ENCODE measurements at regions of chr1 and their contacts with region 1.

Region 1: DNA sequence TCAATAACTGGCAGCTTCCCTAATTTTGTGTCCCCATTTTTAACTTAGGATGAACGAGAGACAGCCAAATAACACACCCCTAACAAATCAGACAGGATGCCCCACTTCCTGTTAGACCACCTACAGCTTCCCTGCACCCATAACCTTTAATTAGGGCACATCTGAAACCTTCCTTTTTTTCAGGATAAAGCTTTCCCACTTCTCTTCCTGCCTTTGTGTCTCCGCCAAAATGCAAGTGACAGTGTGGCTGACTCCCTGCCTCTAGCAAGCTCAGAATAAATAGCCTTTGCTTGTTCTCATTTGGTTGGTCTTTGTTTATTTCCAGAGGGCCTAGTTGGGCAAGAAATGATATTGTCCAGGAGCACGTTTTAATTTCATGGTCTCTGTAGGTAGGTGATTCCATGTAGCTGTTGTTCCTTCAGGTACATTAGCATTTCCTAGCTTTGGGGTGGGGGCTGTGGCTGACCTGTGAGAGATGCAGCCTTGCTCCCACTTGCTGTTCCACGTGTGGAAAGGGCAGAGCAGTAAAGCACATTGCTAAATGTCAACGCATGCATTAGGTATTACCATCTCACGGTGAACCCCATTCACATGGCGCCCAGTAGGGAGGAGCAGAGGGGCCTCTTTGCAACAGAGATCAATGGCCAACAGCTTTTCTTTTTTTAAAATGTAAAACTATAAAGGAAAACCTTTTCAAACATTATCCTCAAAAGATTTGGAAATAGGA is 154.9 kb downstream of the ST6GALNAC3 start:
- DNase-seq: no peak
- ATAC-seq: no peak
- H3K4me3 ChIP-seq: no peak overlapping the region
- H3K4me3 Mint-ChIP-seq: no peak overlapping the region
- H3K27ac ChIP-seq: no peak overlapping the region
- H3K27ac Mint-ChIP-seq: peak overlapping the region in 3 of 9 donors; percentile 23 to 48 (median 41)
- H3K4me1 ChIP-seq: peaks cover 0 to 17% of the 10 kb centered on the region in 2 donors
- H3K4me1 Mint-ChIP-seq: peaks cover 7 to 35% (median 21%) of the 10 kb centered on the region in 7 donors
- H3K27me3 ChIP-seq: no peaks in the 10 kb centered on the region
- H3K27me3 Mint-ChIP-seq: no peaks in the 10 kb centered on the region

Region 2: DNA sequence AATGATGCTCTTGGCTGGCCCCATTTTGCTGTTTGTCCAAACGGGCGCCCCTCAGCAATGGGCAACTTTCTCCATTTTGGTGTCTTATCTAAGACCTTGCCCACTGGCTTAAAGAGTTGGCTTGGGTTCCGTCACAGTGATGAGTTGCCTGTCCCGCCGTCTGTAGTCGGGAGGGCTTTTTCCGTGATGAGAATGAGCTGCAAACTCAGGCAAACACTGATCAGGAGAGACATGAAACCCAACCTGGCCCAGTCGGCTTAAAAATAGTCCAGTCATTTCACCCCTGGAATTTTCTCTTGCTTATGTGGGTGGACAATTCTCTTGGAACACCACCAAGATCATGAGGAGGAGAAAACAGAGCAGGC is 75.6 kb before region 1 on chr1:
- CTCF ChIA-PET with region 1: no interaction called
- POLR2A ChIA-PET with region 1: no interaction called
- intact Hi-C with region 1: no loop called
- DNase-seq: no peak
- ATAC-seq: no peak
- H3K4me3 ChIP-seq: no peak overlapping the region
- H3K4me3 Mint-ChIP-seq: peak overlapping the region in 8 of 10 donors; percentile 84 to 96 (median 93)
- H3K27ac ChIP-seq: no peak overlapping the region
- H3K27ac Mint-ChIP-seq: peak overlapping the region in 7 of 9 donors; percentile 39 to 93 (median 90)
- H3K4me1 ChIP-seq: peaks cover 0 to 3% of the 10 kb centered on the region in 2 donors
- H3K4me1 Mint-ChIP-seq: peaks cover 7 to 15% (median 10%) of the 10 kb centered on the region in 7 donors
- H3K27me3 ChIP-seq: no peaks in the 10 kb centered on the region
- H3K27me3 Mint-ChIP-seq: peaks cover 0 to 9% (median 0%) of the 10 kb centered on the region in 5 donors

Region 3: GRCh38 chr1:76285578-76286135 is 56.2 kb after region 1 on chr1:
- CTCF ChIA-PET with region 1: no interaction called
- POLR2A ChIA-PET with region 1: no interaction called
- intact Hi-C with region 1: loop called in 1 of 2 experiments (anchors 5 kb)
- DNase-seq: peak in 5 of 9 donors; percentile 30 to 51 (median 37)
- ATAC-seq: peak; percentile 54
- H3K4me3 ChIP-seq: no peak overlapping the region
- H3K4me3 Mint-ChIP-seq: peak overlapping the region in 9 of 10 donors; percentile 15 to 75 (median 59)
- H3K27ac ChIP-seq: peak overlapping the region; percentile 6
- H3K27ac Mint-ChIP-seq: peak overlapping the region; percentile 33 to 95 (median 70)
- H3K4me1 ChIP-seq: peaks cover 8 to 54% of the 10 kb centered on the region in 2 donors
- H3K4me1 Mint-ChIP-seq: peaks cover 16 to 92% (median 64%) of the 10 kb centered on the region in 7 donors
- H3K27me3 ChIP-seq: no peaks in the 10 kb centered on the region
- H3K27me3 Mint-ChIP-seq: no peaks in the 10 kb centered on the region

Measured in naive thymus-derived CD4-positive, alpha-beta T cell (primary cell).